ENCODE measurements at regions of chr9 and their contacts with region 1.

Region 1: GRCh38 chr9:92295827-92296258 is 2.3 kb upstream of the IARS1 start:
- DNase-seq: no peak
- H3K4me3 ChIP-seq: no peak overlapping the region
- H3K27ac ChIP-seq: no peak overlapping the region
- H3K4me1 ChIP-seq: peaks cover 11% of the 10 kb centered on the region
- H3K27me3 ChIP-seq: no peaks in the 10 kb centered on the region
- CTCF ChIP-seq: no peak

Region 2: GRCh38 chr9:91803151-91803940 is 492.5 kb before region 1 on chr9:
- intact Hi-C with region 1: no loop called
- DNase-seq: no peak
- H3K4me3 ChIP-seq: no peak overlapping the region
- H3K27ac ChIP-seq: no peak overlapping the region
- H3K4me1 ChIP-seq: peaks cover 2% of the 10 kb centered on the region
- H3K27me3 ChIP-seq: no peaks in the 10 kb centered on the region
- CTCF ChIP-seq: no peak

Region 3: GRCh38 chr9:92133949-92134604 is 161.8 kb before region 1 on chr9:
- intact Hi-C with region 1: loop called (anchors 5 kb)
- DNase-seq: peak; percentile 74
- H3K4me3 ChIP-seq: no peak overlapping the region
- H3K27ac ChIP-seq: no peak overlapping the region
- H3K4me1 ChIP-seq: no peaks in the 10 kb centered on the region
- H3K27me3 ChIP-seq: no peaks in the 10 kb centered on the region
- CTCF ChIP-seq: peak; percentile 94

Region 4: GRCh38 chr9:92438900-92439526 is 143.2 kb after region 1 on chr9:
- intact Hi-C with region 1: no loop called
- DNase-seq: no peak
- H3K4me3 ChIP-seq: no peak overlapping the region
- H3K27ac ChIP-seq: no peak overlapping the region
- H3K4me1 ChIP-seq: no peaks in the 10 kb centered on the region
- H3K27me3 ChIP-seq: no peaks in the 10 kb centered on the region
- CTCF ChIP-seq: no peak

Measured in colonic mucosa (tissue), 4 donors.